Activated CD8-positive, alpha-beta T cell treated with anti-CD3 and anti-CD28 coated beads for 36 hours (primary cell): ENCODE measurements at regions of chr18 and their contacts with region 1.

Region 1: GRCh38 chr18:24019641-24020331 is 5.2 kb downstream of the TTC39C start:
- DNase-seq: peak; percentile 83
- ATAC-seq: peak; percentile 68
- H3K4me3 Mint-ChIP-seq: peak overlapping the region; percentile 65
- H3K27ac Mint-ChIP-seq: peak overlapping the region; percentile 97
- H3K4me1 Mint-ChIP-seq: peaks cover 84% of the 10 kb centered on the region
- H3K27me3 Mint-ChIP-seq: no peaks in the 10 kb centered on the region
- CTCF ChIP-seq: no peak

Region 2: GRCh38 chr18:24054130-24054529 is 34.3 kb after region 1 on chr18:
- CTCF ChIA-PET with region 1: no interaction called
- POLR2A ChIA-PET with region 1: interaction called, 6 read pairs
- intact Hi-C with region 1: loop called (anchors 2 kb)
- DNase-seq: peak; percentile 62
- ATAC-seq: peak; percentile 60
- H3K4me3 Mint-ChIP-seq: peak overlapping the region; percentile 15
- H3K27ac Mint-ChIP-seq: peak overlapping the region; percentile 68
- H3K4me1 Mint-ChIP-seq: peaks cover 81% of the 10 kb centered on the region
- H3K27me3 Mint-ChIP-seq: no peaks in the 10 kb centered on the region
- CTCF ChIP-seq: no peak